BJ (cell line): ENCODE measurements at regions of chrX and their contacts with region 1.

Region 1: DNA sequence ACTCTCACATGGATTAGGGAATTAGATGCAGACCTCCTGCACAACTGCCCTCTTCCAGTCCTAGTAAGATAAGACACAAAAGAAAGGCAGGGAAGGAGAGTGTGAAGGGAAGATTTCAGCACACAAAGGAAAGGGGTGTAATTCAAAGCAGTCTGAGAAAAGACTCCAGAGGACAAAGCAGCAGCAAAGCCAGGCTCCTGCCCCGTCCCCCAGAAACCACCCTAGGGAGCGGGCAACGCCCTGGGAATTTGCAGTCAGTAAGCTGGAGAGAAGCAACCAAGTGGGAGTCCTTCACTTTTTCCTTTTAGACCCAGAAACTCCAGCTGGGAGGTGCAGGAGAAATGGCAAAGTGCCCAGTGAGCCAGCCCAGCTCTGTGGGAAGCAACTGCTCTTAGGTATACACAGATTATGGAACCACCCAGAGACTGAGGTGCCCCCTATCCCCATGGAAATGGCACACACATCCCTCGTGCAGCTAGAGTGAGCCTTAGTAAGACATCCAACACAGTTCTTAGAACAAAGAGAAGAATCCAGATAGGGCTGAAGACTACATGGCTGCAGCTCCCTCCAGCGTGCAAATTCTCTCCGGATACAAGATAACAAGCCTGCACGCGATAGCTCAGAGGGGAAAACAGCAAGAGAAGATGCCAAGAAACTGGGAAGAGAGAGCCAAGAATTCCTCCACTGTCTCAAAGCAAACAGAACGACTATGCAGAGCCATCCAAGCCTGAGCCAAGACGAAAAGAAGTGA is 26.5 kb upstream of the IRAK1 start:
- DNase-seq: peak; percentile 74
- H3K4me3 ChIP-seq: no peak overlapping the region
- H3K27me3 ChIP-seq: no peaks in the 10 kb centered on the region
- CTCF ChIP-seq: peak; percentile 36

Region 2: DNA sequence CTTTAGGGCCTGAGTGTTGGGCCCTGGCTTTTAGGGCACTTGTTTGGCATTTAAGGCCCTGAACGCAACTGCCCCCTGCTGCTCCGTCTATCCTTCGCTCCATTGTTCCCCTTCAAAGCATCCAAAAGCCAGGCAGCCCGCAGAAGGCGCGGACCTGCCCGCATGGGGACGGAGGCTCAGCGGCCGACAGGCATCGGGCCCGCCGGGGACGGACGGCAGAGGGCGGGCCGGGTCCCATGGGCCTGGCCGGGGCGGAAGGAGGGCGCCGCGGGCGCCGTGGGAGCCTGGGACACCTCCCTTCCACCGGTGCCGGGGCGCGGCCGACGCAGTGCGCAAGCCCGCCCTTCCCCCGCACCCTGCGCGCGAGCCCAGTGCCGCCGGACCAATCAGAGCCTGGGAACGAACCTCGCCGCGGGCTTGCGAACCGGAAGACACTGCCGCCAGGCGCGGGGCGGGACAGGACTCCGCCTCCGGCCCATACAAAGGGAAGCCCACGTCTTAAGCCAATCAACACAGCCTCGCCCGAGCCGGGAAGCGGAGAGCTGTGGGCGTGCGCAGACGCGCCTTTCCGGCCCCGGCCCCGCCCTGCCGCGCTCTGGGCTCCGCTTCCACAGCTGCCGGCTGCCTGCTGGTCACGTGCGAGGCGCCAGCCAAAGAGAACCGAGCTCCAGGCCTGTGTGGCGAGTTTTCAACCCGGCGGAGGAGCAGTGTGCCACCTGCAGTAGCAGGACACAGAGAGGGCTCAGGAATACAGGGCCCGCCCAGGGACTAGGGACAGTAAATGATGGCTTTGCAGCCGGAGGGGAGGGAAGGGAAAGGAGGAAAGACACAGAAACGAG is 118.1 kb before region 1 on chrX:
- CTCF ChIA-PET with region 1: no interaction called
- POLR2A ChIA-PET with region 1: no interaction called
- DNase-seq: peak; percentile 92
- H3K4me3 ChIP-seq: peak overlapping the region; percentile 54
- H3K27me3 ChIP-seq: no peaks in the 10 kb centered on the region
- CTCF ChIP-seq: peak; percentile 27; the same call in 1 of the 2 replicates

Region 3: GRCh38 chrX:153992180-153992579 is 54.0 kb before region 1 on chrX:
- CTCF ChIA-PET with region 1: no interaction called
- POLR2A ChIA-PET with region 1: interaction called, 17 read pairs
- DNase-seq: no peak
- H3K4me3 ChIP-seq: no peak overlapping the region
- H3K27me3 ChIP-seq: no peaks in the 10 kb centered on the region
- CTCF ChIP-seq: no peak